GM12878 (cell line): ENCODE measurements at regions of chr6 and their contacts with region 1.

Region 1: GRCh38 chr6:91509703-91510102 is 922.8 kb upstream of the MAP3K7 start:
- DNase-seq: no peak
- ATAC-seq: no peak
- H3K4me3 ChIP-seq: no peak overlapping the region
- H3K27ac ChIP-seq: no peak overlapping the region
- H3K4me1 ChIP-seq: no peaks in the 10 kb centered on the region
- H3K27me3 ChIP-seq: no peaks in the 10 kb centered on the region
- CTCF ChIP-seq: no peak
- EP300 ChIP-seq: no peak
- POLR2A ChIP-seq: no peak
- RAD21 ChIP-seq: no peak

Region 2: GRCh38 chr6:91523511-91523910 is 13.8 kb after region 1 on chr6:
- CTCF ChIA-PET with region 1: interaction called, 7 read pairs
- POLR2A ChIA-PET with region 1: interaction called, 4 read pairs
- RAD21 ChIA-PET with region 1: interaction called, 5 read pairs
- SMC1A ChIA-PET with region 1: interaction called, 16 read pairs
- in situ Hi-C with region 1: no loop called
- intact Hi-C with region 1: no loop called
- DNase-seq: no peak
- ATAC-seq: no peak
- H3K4me3 ChIP-seq: no peak overlapping the region
- H3K27ac ChIP-seq: no peak overlapping the region
- H3K4me1 ChIP-seq: no peaks in the 10 kb centered on the region
- H3K27me3 ChIP-seq: no peaks in the 10 kb centered on the region
- CTCF ChIP-seq: no peak
- EP300 ChIP-seq: no peak
- POLR2A ChIP-seq: no peak
- RAD21 ChIP-seq: no peak